ENCODE measurements at regions of chr14 and their contacts with region 1.

Region 1: GRCh38 chr14:91649930-91650329 is 82.0 kb downstream of the CATSPERB start:
- DNase-seq: peak in 1 of 2 experiments; percentile 29
- H3K4me3 ChIP-seq: no peak overlapping the region
- H3K4me3 Mint-ChIP-seq: no peak overlapping the region
- H3K27ac Mint-ChIP-seq: no peak overlapping the region
- H3K4me1 ChIP-seq: peaks cover 7% of the 10 kb centered on the region
- H3K4me1 Mint-ChIP-seq: peaks cover 13% of the 10 kb centered on the region
- H3K27me3 ChIP-seq: no peaks in the 10 kb centered on the region
- H3K27me3 Mint-ChIP-seq: no peaks in the 10 kb centered on the region
- CTCF ChIP-seq: peak; percentile 25 to 29

Region 2: DNA sequence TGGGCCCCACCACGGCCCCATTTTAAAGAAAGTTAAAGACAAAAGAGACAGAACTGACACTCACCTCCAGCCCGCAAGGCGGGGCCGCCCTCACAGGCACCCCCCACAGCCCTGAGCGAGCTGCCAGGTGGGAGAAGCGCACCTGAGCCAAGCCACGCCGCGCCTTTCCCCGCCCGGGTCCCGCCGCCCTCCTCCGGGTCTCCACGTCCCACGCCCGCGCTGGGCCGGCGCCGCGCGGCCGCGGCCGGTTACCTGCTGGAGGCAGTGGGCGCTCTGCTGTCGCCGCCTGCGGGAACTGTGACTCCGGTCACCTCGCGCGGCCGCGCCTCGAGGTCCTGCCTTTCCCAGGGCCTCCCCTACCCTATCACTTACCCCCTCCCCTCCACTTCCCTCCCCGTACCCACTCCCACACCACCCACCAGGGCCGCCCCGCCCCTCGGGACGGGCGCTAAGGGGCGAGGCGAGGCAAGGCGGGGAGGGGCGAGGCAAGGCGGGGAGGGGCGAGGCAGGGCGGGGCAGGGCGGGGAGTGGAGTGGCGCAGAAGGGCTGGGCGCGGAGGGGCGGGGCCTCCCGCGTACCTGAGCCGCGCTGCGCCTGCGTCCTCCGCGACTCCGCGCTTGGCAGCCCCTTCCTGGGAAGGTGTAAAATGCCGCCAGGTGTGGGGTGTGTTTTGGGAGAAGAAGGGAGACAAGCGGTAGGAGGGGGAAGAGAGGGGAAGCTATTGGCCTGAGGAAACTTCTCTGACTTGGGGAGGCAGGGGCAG is 186.4 kb after region 1 on chr14:
- CTCF ChIA-PET with region 1: no interaction called
- POLR2A ChIA-PET with region 1: no interaction called
- intact Hi-C with region 1: loop called (anchors 1 kb)
- DNase-seq: peak; percentile 90
- H3K4me3 ChIP-seq: peak overlapping the region; percentile 94
- H3K4me3 Mint-ChIP-seq: peak overlapping the region; percentile 90
- H3K27ac Mint-ChIP-seq: peak overlapping the region; percentile 81
- H3K4me1 ChIP-seq: peaks cover 19% of the 10 kb centered on the region
- H3K4me1 Mint-ChIP-seq: peaks cover 9% of the 10 kb centered on the region
- H3K27me3 ChIP-seq: no peaks in the 10 kb centered on the region
- H3K27me3 Mint-ChIP-seq: no peaks in the 10 kb centered on the region
- CTCF ChIP-seq: no peak

Region 3: DNA sequence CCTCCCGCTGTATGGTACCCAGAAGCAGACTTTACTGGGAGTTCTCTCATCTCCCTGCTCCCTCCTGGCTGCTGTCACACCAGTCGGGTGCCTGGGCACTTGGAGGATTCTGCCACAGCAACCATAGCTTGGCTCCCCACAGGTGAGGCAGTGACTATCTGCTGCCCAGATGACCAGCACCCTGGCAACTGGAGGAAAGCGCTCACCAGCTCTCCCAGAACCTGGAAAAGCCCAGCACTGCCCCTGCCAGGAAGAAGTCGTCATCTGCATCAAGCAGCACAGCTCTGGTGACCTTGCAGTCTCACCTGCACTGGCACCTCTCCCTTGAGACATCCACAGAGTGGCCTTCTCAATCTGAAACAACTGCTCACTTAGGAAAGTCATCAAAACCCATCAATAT is 249.3 kb after region 1 on chr14:
- CTCF ChIA-PET with region 1: interaction called, 4 read pairs
- POLR2A ChIA-PET with region 1: no interaction called
- intact Hi-C with region 1: loop called (anchors 2 kb)
- DNase-seq: peak; percentile 49 to 55
- H3K4me3 ChIP-seq: no peak overlapping the region
- H3K4me3 Mint-ChIP-seq: no peak overlapping the region
- H3K27ac Mint-ChIP-seq: no peak overlapping the region
- H3K4me1 ChIP-seq: no peaks in the 10 kb centered on the region
- H3K4me1 Mint-ChIP-seq: no peaks in the 10 kb centered on the region
- H3K27me3 ChIP-seq: no peaks in the 10 kb centered on the region
- H3K27me3 Mint-ChIP-seq: no peaks in the 10 kb centered on the region
- CTCF ChIP-seq: peak in 1 of 2 experiments; percentile 44

Region 4: GRCh38 chr14:91911474-91912032 is 261.6 kb after region 1 on chr14:
- CTCF ChIA-PET with region 1: interaction called, 10 read pairs
- POLR2A ChIA-PET with region 1: no interaction called
- intact Hi-C with region 1: no loop called
- DNase-seq: peak; percentile 43 to 45
- H3K4me3 ChIP-seq: no peak overlapping the region
- H3K4me3 Mint-ChIP-seq: no peak overlapping the region
- H3K27ac Mint-ChIP-seq: no peak overlapping the region
- H3K4me1 ChIP-seq: no peaks in the 10 kb centered on the region
- H3K4me1 Mint-ChIP-seq: no peaks in the 10 kb centered on the region
- H3K27me3 ChIP-seq: no peaks in the 10 kb centered on the region
- H3K27me3 Mint-ChIP-seq: no peaks in the 10 kb centered on the region
- CTCF ChIP-seq: peak in 1 of 2 experiments; percentile 52

Region 5: GRCh38 chr14:91996948-91997371 is 347.0 kb after region 1 on chr14:
- CTCF ChIA-PET with region 1: interaction called, 11 read pairs
- POLR2A ChIA-PET with region 1: no interaction called
- intact Hi-C with region 1: loop called (anchors 1 kb)
- DNase-seq: peak in 1 of 2 experiments; percentile 36
- H3K4me3 ChIP-seq: no peak overlapping the region
- H3K4me3 Mint-ChIP-seq: no peak overlapping the region
- H3K27ac Mint-ChIP-seq: no peak overlapping the region
- H3K4me1 ChIP-seq: no peaks in the 10 kb centered on the region
- H3K4me1 Mint-ChIP-seq: peaks cover 7% of the 10 kb centered on the region
- H3K27me3 ChIP-seq: no peaks in the 10 kb centered on the region
- H3K27me3 Mint-ChIP-seq: no peaks in the 10 kb centered on the region
- CTCF ChIP-seq: peak; percentile 42 to 56